ENCODE measurements at regions of chr20 and their contacts with region 1.

Region 1: DNA sequence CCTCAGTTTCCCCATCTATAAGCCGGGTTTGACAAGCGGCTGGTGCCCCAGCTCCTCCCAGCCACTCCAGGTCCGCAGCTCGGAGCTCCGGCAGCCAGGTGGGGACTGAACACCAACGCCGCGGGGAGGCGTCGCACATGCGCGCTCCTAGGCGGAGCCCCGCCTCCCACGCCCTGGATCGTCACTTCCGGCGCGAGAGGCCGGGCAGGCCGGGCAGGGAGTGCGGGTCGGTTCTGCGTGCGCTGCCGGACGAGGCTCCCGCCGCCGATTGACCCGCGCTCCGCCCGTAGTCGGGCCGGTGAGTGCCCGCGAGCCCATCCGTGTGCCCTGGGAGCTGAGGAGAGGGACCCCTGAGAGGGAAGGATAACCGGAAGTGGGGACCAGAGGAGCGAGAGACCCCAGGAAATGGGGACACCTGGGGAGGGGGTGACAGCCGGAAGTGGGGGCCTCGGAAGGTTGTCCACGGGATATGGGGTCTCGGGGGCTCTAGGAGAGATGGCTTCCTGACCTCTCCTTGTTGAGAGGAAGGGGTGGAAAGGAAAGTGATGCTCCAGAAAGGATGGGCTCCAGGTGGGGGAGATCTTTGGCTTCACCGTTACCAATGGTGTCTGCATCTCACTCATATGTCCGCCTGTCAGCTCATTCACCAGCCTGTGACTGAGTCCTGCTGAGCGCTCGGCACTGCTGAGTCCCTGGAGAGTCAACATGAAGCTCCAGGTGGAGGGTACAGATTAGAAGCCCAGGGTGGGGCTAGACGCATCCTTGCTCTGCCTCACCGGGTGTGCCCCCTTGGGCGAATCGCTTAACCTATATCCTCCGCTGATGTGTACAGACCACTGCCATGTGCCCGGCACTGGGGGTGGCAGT is at the start of gene TTPAL:
- DNase-seq: peak; percentile 95
- H3K4me3 ChIP-seq: peak within 1 kb of the TSS; percentile 60 to 83 (median 76)
- H3K27ac ChIP-seq: peak within 1 kb of the TSS; percentile 86 to 94 (median 92)
- H3K4me1 ChIP-seq: peaks cover 0 to 20% (median 14%) of the 10 kb centered on the region in 4 donors
- H3K27me3 ChIP-seq: peaks cover 0 to 3% (median 0%) of the 10 kb centered on the region in 3 donors
- CTCF ChIP-seq: peak in 2 of 4 experiments; percentile 10 to 41
- EP300 ChIP-seq: no peak
- POLR2A ChIP-seq: peak; percentile 95 to 99
- total RNA-seq, gene TTPAL: 7.2 to 10.0 (median 8.3) TPM

Region 2: DNA sequence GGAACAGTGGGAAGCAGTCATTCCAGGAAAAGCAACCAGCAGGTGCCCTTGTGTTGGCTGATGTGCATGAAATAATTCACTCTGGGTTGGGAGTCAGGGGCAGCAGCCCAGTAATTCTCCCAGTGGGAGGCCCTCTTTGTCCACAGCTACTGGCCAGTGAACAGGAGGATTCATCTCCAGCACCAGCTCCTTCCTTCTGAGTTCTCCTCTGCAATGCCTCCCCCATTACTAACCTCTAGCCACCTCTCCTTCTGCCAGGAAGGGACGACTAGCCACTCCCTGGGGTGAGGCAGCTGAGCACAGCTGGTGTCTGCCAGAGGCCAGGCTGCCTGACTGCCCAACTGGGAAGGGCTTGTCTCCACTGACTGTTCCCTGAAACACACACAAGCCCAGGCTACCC is 151.6 kb before region 1 on chr20:
- intact Hi-C with region 1: no loop called
- DNase-seq: no peak
- H3K4me3 ChIP-seq: no peak overlapping the region
- H3K27ac ChIP-seq: no peak overlapping the region
- H3K4me1 ChIP-seq: peaks cover 0 to 8% (median 4%) of the 10 kb centered on the region in 4 donors
- H3K27me3 ChIP-seq: peaks cover 0 to 22% (median 15%) of the 10 kb centered on the region in 3 donors
- CTCF ChIP-seq: no peak
- EP300 ChIP-seq: no peak
- POLR2A ChIP-seq: no peak

Region 3: GRCh38 chr20:44521484-44522481 is 45.9 kb after region 1 on chr20 and contains the start of gene SERINC3:
- intact Hi-C with region 1: loop called (anchors 1 kb)
- DNase-seq: peak; percentile 99
- H3K4me3 ChIP-seq: peak within 1 kb of the TSS; percentile 82 to 98 (median 92)
- H3K27ac ChIP-seq: peak within 1 kb of the TSS; percentile 97 to 99 (median 98)
- H3K4me1 ChIP-seq: peaks cover 0 to 48% (median 43%) of the 10 kb centered on the region in 4 donors
- H3K27me3 ChIP-seq: no peaks in the 10 kb centered on the region
- CTCF ChIP-seq: no peak
- EP300 ChIP-seq: peak in 1 of 4 donors; percentile 47
- POLR2A ChIP-seq: peak; percentile 54 to 67
- total RNA-seq, gene SERINC3: 75.9 to 112 (median 88.8) TPM

Region 4: GRCh38 chr20:44552950-44553908 is 77.3 kb after region 1 on chr20:
- intact Hi-C with region 1: no loop called
- DNase-seq: no peak
- H3K4me3 ChIP-seq: no peak overlapping the region
- H3K27ac ChIP-seq: peak overlapping the region; percentile 73 to 92 (median 82)
- H3K4me1 ChIP-seq: peaks cover 0 to 79% (median 67%) of the 10 kb centered on the region in 4 donors
- H3K27me3 ChIP-seq: no peaks in the 10 kb centered on the region
- CTCF ChIP-seq: no peak
- EP300 ChIP-seq: peak in 1 of 4 donors; percentile 48
- POLR2A ChIP-seq: no peak

Region 5: DNA sequence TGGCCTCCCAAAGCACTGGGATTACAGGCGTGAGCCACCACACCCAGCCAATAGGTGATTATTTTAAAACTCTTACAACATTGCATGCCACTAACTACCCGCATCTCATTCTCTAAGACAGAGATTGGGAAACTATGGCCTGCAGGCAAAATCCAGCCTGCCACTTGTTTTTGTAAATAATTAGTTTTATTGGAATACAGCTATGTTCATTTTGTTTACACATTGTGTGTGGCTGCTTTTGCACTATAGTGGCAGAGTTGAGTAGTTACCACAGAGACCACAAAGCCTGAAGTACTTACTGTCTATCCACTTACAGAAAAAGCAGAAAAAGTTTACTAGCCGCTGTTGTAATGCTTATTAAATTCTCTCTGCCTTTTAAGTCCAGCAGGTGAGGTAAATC is 90.1 kb after region 1 on chr20:
- intact Hi-C with region 1: no loop called
- DNase-seq: no peak
- H3K4me3 ChIP-seq: peak overlapping the region in 2 of 4 donors; percentile 29 to 50
- H3K27ac ChIP-seq: peak overlapping the region; percentile 16 to 95 (median 84)
- H3K4me1 ChIP-seq: peaks cover 0 to 63% (median 48%) of the 10 kb centered on the region in 4 donors
- H3K27me3 ChIP-seq: no peaks in the 10 kb centered on the region
- CTCF ChIP-seq: no peak
- EP300 ChIP-seq: no peak
- POLR2A ChIP-seq: no peak

Region 6: GRCh38 chr20:44609511-44610312 is 133.8 kb after region 1 on chr20:
- intact Hi-C with region 1: loop called (anchors 2 kb)
- DNase-seq: peak; percentile 94
- H3K4me3 ChIP-seq: peak overlapping the region; percentile 9 to 38 (median 25)
- H3K27ac ChIP-seq: peak overlapping the region; percentile 83 to 95 (median 90)
- H3K4me1 ChIP-seq: peaks cover 0 to 47% (median 42%) of the 10 kb centered on the region in 4 donors
- H3K27me3 ChIP-seq: no peaks in the 10 kb centered on the region
- CTCF ChIP-seq: peak; percentile 97 to 98 (median 98)
- EP300 ChIP-seq: no peak
- POLR2A ChIP-seq: no peak

Region 7: GRCh38 chr20:44885392-44886265 is 409.7 kb after region 1 on chr20 and contains the start of gene YWHAB:
- intact Hi-C with region 1: loop called (anchors 5 kb)
- DNase-seq: peak; percentile 99
- H3K4me3 ChIP-seq: peak within 1 kb of the TSS; percentile 92 to 99 (median 96)
- H3K27ac ChIP-seq: peak within 1 kb of the TSS; percentile 96 to 99 (median 98)
- H3K4me1 ChIP-seq: peaks cover 0 to 49% (median 42%) of the 10 kb centered on the region in 4 donors
- H3K27me3 ChIP-seq: no peaks in the 10 kb centered on the region
- CTCF ChIP-seq: peak in 1 of 4 experiments; percentile 26
- EP300 ChIP-seq: no peak
- POLR2A ChIP-seq: peak; percentile 69 to 80
- total RNA-seq, gene YWHAB: 80.3 to 110 (median 89.8) TPM

Region 8: DNA sequence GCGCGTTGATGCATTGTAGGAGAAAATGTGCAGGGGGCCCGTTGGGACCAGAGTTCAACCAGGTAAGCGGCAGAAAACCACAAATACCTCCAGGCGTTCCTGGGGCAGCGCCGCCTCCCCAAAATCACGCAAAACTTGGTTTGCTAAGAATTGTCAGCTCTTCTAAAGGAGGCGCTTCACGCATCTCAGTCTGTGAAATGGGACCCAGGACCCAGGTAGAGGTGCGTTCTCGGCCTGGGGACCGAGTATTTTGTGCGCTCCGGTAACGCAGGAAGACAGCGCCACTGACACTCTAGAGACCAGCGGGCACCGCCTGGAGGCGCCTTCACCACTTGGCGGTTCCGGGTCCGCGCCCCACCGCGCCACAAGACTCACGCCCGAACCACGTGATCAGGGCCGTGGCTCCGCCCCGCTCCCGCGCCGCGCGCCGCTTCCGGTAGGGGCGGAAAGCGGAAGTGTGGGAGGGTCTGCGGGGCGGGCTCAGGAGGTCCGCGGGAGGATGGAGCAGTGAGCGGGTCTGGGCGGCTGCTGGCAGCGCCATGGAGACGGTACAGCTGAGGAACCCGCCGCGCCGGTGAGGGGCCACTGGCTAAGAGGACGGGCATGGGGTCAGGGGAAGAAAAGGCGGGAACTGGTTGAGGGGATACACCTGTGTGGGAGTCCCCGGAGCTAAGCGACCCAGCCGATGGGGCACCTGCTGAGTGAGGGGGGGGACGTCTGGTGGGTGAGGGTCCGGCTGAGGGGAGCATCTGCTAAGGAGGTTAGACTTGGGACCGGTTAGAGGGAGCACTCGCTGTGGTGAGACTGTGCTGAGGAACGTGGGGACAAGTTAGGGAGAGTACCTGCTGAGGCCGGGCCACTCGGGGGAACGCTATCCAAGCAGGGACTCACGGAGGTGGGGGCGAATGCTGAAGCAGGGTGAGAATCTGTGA is 490.4 kb after region 1 on chr20 and contains the start of gene STK4:
- intact Hi-C with region 1: loop called (anchors 10 kb)
- DNase-seq: peak; percentile 95
- H3K4me3 ChIP-seq: peak within 1 kb of the TSS; percentile 59 to 82 (median 80)
- H3K27ac ChIP-seq: peak within 1 kb of the TSS; percentile 83 to 85 (median 85)
- H3K4me1 ChIP-seq: peaks cover 0 to 40% (median 32%) of the 10 kb centered on the region in 4 donors
- H3K27me3 ChIP-seq: no peaks in the 10 kb centered on the region
- CTCF ChIP-seq: peak; percentile 15 to 47 (median 42)
- EP300 ChIP-seq: peak in 1 of 4 donors; percentile 65
- POLR2A ChIP-seq: peak; percentile 83 to 91
- total RNA-seq, gene STK4: 23.9 to 31.8 (median 28.1) TPM

Region 9: GRCh38 chr20:45080867-45081624 is 605.1 kb after region 1 on chr20:
- intact Hi-C with region 1: no loop called
- DNase-seq: no peak
- H3K4me3 ChIP-seq: no peak overlapping the region
- H3K27ac ChIP-seq: no peak overlapping the region
- H3K4me1 ChIP-seq: no peaks in the 10 kb centered on the region
- H3K27me3 ChIP-seq: no peaks in the 10 kb centered on the region
- CTCF ChIP-seq: no peak
- EP300 ChIP-seq: no peak
- POLR2A ChIP-seq: no peak

Measured in sigmoid colon (tissue), 7 donors.